ENCODE measurements at regions of chr2 and their contacts with region 1.

Region 1: DNA sequence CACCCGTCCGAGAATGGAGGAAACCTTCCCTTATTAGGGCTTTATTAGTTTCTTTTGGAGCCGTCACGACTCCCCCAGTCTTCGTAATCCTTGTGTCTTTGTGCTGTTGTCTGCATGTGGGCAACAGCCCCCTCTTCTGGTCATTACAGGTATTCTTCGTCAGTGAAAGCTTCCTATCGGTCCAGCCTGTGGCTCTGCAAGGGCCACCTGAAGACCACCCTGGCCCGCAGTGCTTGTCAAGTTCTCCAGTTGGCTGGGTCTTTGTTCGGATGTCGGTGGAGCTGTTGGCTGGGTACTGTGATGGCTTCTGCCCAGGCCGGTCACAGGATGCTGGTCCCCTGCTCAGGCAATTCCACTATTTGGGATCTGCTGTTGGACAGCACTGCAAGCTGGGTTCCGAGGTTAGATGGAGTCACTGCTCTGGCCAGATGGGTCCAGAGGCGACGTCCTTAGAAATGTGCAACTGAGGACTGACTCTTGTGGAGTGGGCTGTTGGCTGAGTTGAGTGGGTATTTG is 19.2 kb downstream of the E2F6 start:
- DNase-seq: peak; percentile 51 to 85
- H3K4me3 ChIP-seq: no peak overlapping the region
- H3K27ac ChIP-seq: no peak overlapping the region
- H3K4me1 ChIP-seq: no peaks in the 10 kb centered on the region
- H3K27me3 ChIP-seq: no peaks in the 10 kb centered on the region
- CTCF ChIP-seq: peak; percentile 64 to 88 (median 85)
- EP300 ChIP-seq: no peak
- POLR2A ChIP-seq: no peak
- RAD21 ChIP-seq: peak; percentile 86 to 92

Region 2: DNA sequence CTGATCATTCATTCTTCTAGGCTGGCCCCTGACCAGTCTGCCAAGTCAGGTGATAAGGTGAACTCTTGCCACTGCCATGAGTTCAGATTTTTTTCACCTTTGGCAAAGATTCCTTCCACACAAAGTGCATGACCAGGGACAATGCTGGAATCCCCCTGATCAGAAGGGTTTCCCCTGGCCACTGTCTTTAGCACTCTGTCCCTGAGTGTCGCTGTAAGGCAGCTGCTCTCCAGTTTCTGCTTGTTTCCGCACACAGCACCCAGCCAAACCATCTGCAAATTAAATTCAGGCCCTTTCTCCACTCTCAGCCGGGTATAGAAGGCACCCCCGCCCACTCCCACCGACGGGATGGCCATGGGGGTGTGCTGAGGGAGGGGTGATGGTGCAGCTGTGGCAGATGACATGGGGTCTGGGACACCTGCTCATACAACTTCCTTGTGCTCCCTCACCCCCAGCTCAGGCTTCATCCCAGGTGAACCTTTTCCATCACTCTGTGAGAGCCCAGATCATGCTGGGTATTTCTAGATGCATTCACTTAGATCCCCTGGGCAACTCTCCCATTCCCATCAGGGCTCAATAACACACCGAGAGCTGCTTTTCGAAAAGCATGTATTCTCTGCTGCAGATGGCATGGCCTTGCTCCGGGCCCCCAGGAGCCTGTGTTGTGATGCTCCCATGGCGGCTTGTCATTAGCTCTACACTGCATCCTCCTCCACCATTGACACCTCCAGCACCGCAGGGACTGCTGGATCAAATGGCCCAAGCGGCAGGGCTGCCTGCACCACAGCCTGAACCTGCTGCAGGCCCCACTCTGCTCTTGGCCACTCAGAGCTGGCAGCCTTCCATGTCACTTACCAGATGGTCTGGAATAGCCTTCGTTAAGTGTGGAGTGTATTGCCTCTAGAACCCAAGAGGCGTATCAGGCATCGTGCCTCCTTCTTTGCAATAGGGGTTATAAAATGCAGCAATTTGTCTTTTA is 50.0 kb before region 1 on chr2:
- CTCF ChIA-PET with region 1: no interaction called
- POLR2A ChIA-PET with region 1: no interaction called
- DNase-seq: no peak
- H3K4me3 ChIP-seq: no peak overlapping the region
- H3K27ac ChIP-seq: no peak overlapping the region
- H3K4me1 ChIP-seq: peaks cover 0 to 5% (median 4%) of the 10 kb centered on the region in 4 experiments; a peak in 5 of 7 replicates
- H3K27me3 ChIP-seq: no peaks in the 10 kb centered on the region
- CTCF ChIP-seq: no peak
- EP300 ChIP-seq: no peak
- POLR2A ChIP-seq: no peak
- RAD21 ChIP-seq: no peak

Region 3: GRCh38 chr2:11430729-11431128 is 16.1 kb before region 1 on chr2:
- CTCF ChIA-PET with region 1: interaction called, 12 read pairs
- POLR2A ChIA-PET with region 1: no interaction called
- DNase-seq: no peak
- H3K4me3 ChIP-seq: no peak overlapping the region
- H3K27ac ChIP-seq: no peak overlapping the region
- H3K4me1 ChIP-seq: no peaks in the 10 kb centered on the region
- H3K27me3 ChIP-seq: no peaks in the 10 kb centered on the region
- CTCF ChIP-seq: no peak
- EP300 ChIP-seq: no peak
- POLR2A ChIP-seq: no peak
- RAD21 ChIP-seq: no peak

Region 4: DNA sequence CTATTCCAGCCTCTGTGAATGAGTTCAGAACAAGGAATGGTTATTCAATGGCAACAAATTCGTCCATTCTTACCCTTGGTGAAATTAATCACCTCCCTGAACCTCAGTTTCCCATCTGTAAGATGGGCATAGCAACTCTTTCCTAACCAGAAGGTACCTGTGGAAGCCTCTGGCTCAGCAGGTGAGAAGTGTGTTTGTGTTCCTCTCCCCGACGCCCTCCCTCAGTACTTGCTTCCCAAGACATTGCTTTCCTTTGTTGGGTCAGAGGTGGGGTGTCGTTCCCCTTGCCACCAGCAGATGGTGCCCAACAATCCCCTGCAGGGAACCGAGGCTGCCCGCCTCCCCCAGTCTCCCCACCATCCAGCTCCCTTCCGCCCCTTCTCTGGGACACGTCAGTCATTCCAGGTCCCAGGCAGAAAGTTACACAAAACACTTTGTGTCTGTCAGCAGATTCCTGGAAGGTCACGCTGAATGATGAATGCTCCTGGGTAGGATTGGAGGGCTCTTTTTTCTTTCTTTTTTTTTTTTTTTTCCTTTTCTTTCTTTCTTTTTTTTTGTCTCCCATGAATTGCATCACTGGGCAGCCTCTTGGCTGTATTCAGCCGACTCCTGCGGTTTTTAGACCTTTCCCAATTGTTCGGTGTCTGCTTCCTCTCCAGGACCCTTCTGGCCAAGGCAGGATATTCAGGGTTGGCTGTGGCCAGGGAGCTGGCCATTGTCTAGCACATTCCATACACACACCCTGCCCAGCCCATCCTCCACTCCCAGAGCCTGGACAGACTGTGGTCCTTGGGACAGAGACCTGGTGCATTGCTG is 416.9 kb after region 1 on chr2:
- CTCF ChIA-PET with region 1: no interaction called
- POLR2A ChIA-PET with region 1: no interaction called
- DNase-seq: peak; percentile 78 to 88
- H3K4me3 ChIP-seq: peak overlapping the region in 1 of 4 experiments; percentile 24; a peak in 1 of 8 replicates
- H3K27ac ChIP-seq: no peak overlapping the region
- H3K4me1 ChIP-seq: peaks cover 0 to 10% (median 3%) of the 10 kb centered on the region in 4 experiments; a peak in 6 of 7 replicates
- H3K27me3 ChIP-seq: no peaks in the 10 kb centered on the region
- CTCF ChIP-seq: peak; percentile 79 to 97 (median 95)
- EP300 ChIP-seq: no peak
- POLR2A ChIP-seq: no peak
- RAD21 ChIP-seq: peak; percentile 90 to 91

Measured in H1 (cell line).